SK-N-SH (cell line): ENCODE measurements at regions of chr7 and their contacts with region 1.

Region 1: GRCh38 chr7:23431702-23432199 is 38.5 kb downstream of the IGF2BP3 start:
- DNase-seq: no peak
- H3K4me3 ChIP-seq: no peak overlapping the region
- H3K27ac ChIP-seq: peak overlapping the region in 1 of 2 experiments; percentile 61; a peak in 3 of 4 replicates
- H3K4me1 ChIP-seq: peaks cover 3 to 24% of the 10 kb centered on the region in 2 experiments; a peak in 3 of 4 replicates
- H3K27me3 ChIP-seq: no peaks in the 10 kb centered on the region
- CTCF ChIP-seq: no peak
- EP300 ChIP-seq: no peak
- RAD21 ChIP-seq: no peak

Region 2: DNA sequence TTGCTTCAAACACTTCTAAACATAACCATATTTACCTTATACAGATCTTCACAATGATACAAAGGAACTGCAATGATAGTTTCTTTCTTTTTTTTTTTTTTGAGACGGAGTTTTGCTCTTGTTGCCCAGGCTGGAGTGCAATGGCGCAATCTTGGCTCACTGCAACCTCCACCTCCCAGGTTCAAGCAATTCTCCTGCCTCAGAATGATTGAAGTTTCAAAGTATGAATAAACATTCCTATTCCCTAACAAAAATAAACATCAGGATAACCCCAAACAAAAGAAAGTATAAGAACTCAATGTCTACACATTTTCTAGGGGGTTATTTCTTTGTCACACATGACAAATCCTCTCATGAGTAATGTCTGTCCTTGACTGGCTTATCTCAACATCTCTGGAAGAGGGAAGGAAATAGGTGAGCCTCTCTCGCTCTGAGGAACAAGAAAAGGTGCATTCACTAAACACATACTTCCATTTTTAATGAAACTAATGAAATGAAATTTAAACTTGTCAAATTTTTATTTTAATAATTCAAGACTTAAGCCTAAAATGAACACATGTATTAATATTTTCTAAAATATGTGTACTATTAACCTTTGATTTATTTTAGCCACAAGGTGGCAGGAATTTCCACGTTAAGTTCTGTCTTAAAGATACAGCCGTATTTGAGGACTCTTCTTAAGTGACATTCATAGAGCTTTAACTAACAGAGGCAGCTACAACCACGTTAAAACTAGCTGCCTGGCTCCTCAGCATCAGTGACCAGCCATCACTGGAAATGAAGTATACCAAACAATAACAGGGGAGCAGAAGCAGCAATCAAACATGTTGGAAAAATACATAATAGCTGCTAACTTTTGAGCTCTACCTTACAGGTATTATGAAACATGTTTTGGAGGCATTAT is 74.3 kb before region 1 on chr7:
- CTCF ChIA-PET with region 1: interaction called, 11 read pairs
- POLR2A ChIA-PET with region 1: no interaction called
- DNase-seq: no peak
- H3K4me3 ChIP-seq: no peak overlapping the region; a peak in 1 of 4 replicates
- H3K27ac ChIP-seq: peak overlapping the region in 1 of 2 experiments; percentile 58; a peak in 2 of 4 replicates
- H3K4me1 ChIP-seq: peaks cover 0 to 11% of the 10 kb centered on the region in 2 experiments; a peak in 1 of 4 replicates
- H3K27me3 ChIP-seq: no peaks in the 10 kb centered on the region
- CTCF ChIP-seq: peak; percentile 79
- EP300 ChIP-seq: no peak
- RAD21 ChIP-seq: peak; percentile 65

Region 3: DNA sequence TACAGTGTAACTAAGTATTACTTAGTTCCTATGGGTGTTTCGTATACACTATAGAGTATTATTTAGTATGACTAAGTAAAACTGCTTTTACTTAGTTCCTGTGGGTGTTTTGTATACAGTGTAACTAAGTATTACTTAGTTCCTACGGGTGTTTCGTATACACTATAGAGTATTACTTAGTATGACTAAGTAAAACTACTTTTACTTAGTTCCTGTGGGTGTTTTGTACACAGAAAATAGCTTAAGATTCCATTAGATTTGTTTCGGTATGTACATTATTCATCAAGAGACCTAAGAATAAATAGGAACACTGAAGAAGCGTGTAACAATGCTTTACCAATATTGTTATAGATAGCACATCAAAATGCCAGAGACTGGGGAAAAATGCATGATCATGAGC is 13.6 kb after region 1 on chr7:
- CTCF ChIA-PET with region 1: interaction called, 11 read pairs
- POLR2A ChIA-PET with region 1: no interaction called
- DNase-seq: no peak
- H3K4me3 ChIP-seq: no peak overlapping the region
- H3K27ac ChIP-seq: peak overlapping the region in 1 of 2 experiments; percentile 3; a peak in 2 of 4 replicates
- H3K4me1 ChIP-seq: peaks cover 0 to 9% of the 10 kb centered on the region in 2 experiments; a peak in 1 of 4 replicates
- H3K27me3 ChIP-seq: no peaks in the 10 kb centered on the region
- CTCF ChIP-seq: no peak
- EP300 ChIP-seq: no peak
- RAD21 ChIP-seq: no peak

Region 4: GRCh38 chr7:23462846-23463245 is 31.1 kb after region 1 on chr7:
- CTCF ChIA-PET with region 1: interaction called, 14 read pairs
- POLR2A ChIA-PET with region 1: no interaction called
- DNase-seq: peak; percentile 48
- H3K4me3 ChIP-seq: no peak overlapping the region
- H3K27ac ChIP-seq: peak overlapping the region in 1 of 2 experiments; percentile 28; a peak in 3 of 4 replicates
- H3K4me1 ChIP-seq: peaks cover 30 to 36% of the 10 kb centered on the region in 2 experiments
- H3K27me3 ChIP-seq: no peaks in the 10 kb centered on the region
- CTCF ChIP-seq: peak; percentile 65
- EP300 ChIP-seq: no peak; a peak in 1 of 4 replicates
- RAD21 ChIP-seq: peak; percentile 73

Region 5: GRCh38 chr7:23597094-23598091 is 165.6 kb after region 1 on chr7 and contains the start of gene CCDC126:
- CTCF ChIA-PET with region 1: no interaction called
- POLR2A ChIA-PET with region 1: no interaction called
- DNase-seq: peak; percentile 98
- H3K4me3 ChIP-seq: peak within 1 kb of the TSS; percentile 73 to 77
- H3K27ac ChIP-seq: peak within 1 kb of the TSS; percentile 87 to 90
- H3K4me1 ChIP-seq: peaks cover 0 to 10% of the 10 kb centered on the region in 2 experiments; a peak in 2 of 4 replicates
- H3K27me3 ChIP-seq: no peaks in the 10 kb centered on the region
- CTCF ChIP-seq: no peak
- EP300 ChIP-seq: peak in 1 of 2 experiments; percentile 6; a peak in 1 of 4 replicates
- RAD21 ChIP-seq: no peak
- polyA plus RNA-seq, gene CCDC126: 5.5 and 6.8 TPM in 2 replicates

Region 6: DNA sequence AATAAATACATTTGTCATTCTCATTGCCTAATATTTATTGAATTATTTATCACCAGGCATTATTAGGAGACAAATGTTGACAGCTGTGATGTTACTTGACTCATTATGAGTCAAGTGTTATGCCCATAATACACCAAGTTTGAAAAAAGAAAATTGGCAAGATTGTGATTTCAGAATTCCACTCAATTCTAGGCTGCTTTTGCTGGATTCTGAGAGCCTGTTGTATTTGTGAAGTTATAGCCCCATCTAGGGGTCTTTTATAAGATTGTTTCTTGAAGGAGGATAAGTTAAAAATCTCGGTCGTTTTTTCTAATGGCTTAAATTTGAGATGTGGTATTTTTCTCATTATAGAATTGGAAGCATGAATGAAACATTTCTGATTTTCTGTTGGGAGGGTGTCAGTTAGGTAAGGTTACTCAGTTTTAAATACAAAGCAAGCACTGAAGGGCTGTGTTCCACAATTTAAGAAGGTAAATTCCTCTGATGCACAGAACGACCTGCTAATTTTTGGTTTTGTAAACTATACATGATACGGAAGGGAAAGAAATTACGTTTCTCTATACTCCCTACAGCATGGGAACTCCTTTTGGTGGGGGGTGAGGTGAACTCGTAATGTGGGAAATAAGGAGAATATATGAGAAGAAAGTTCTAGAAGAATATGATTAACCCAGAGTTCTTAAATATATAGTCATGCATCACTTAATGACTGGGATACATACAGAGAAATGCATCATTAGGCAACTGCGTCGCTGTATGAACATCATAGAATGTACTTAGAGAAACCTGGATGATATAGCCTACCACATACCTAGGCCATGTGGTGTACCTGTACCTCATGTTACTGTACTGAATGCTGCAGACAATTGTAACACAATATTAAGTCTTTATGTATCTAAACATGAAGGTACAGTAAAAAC is 280.9 kb after region 1 on chr7:
- CTCF ChIA-PET with region 1: interaction called, 10 read pairs
- POLR2A ChIA-PET with region 1: no interaction called
- DNase-seq: peak; percentile 79
- H3K4me3 ChIP-seq: no peak overlapping the region
- H3K27ac ChIP-seq: no peak overlapping the region
- H3K4me1 ChIP-seq: peaks cover 3 to 14% of the 10 kb centered on the region in 2 experiments; a peak in 2 of 4 replicates
- H3K27me3 ChIP-seq: no peaks in the 10 kb centered on the region
- CTCF ChIP-seq: peak; percentile 89
- EP300 ChIP-seq: no peak
- RAD21 ChIP-seq: peak; percentile 99